Heart right ventricle (tissue), 16 donors: ENCODE measurements at regions of chr12 and their contacts with region 1.

Region 1: GRCh38 chr12:111024205-111024801 is 103.9 kb upstream of the MYL2 start:
- DNase-seq: peak; percentile 42 to 49
- ATAC-seq: peak; percentile 72 to 90 (median 81)
- H3K4me3 ChIP-seq: no peak overlapping the region
- H3K27ac ChIP-seq: no peak overlapping the region
- H3K4me1 ChIP-seq: no peaks in the 10 kb centered on the region
- H3K27me3 ChIP-seq: peaks cover 0 to 62% (median 45%) of the 10 kb centered on the region in 7 donors
- CTCF ChIP-seq: peak; percentile 45 to 86 (median 65)

Region 2: GRCh38 chr12:111166779-111167540 is 142.7 kb after region 1 on chr12:
- intact Hi-C with region 1: loop called in 2 of 10 experiments (anchors 10 kb)
- DNase-seq: peak; percentile 68 to 73
- ATAC-seq: peak; percentile 64 to 93 (median 82)
- H3K4me3 ChIP-seq: no peak overlapping the region
- H3K27ac ChIP-seq: no peak overlapping the region
- H3K4me1 ChIP-seq: peaks cover 0 to 12% (median 0%) of the 10 kb centered on the region in 9 donors
- H3K27me3 ChIP-seq: peaks cover 0 to 14% (median 0%) of the 10 kb centered on the region in 7 donors
- CTCF ChIP-seq: no peak

Region 3: GRCh38 chr12:111174251-111174960 is 150.1 kb after region 1 on chr12:
- intact Hi-C with region 1: loop called in 2 of 10 experiments (anchors 10 kb)
- DNase-seq: no peak
- ATAC-seq: peak in 2 of 8 donors; percentile 43
- H3K4me3 ChIP-seq: no peak overlapping the region
- H3K27ac ChIP-seq: no peak overlapping the region
- H3K4me1 ChIP-seq: peaks cover 0 to 33% (median 0%) of the 10 kb centered on the region in 9 donors
- H3K27me3 ChIP-seq: peaks cover 0 to 32% (median 6%) of the 10 kb centered on the region in 7 donors
- CTCF ChIP-seq: peak in 7 of 9 donors; percentile 14 to 43 (median 36)

Region 4: GRCh38 chr12:111298582-111299436 is 274.5 kb after region 1 on chr12:
- intact Hi-C with region 1: loop called in 9 of 10 experiments (anchors 2 to 10 kb)
- DNase-seq: peak; percentile 23 to 35
- ATAC-seq: peak; percentile 45 to 84 (median 68)
- H3K4me3 ChIP-seq: no peak overlapping the region
- H3K27ac ChIP-seq: no peak overlapping the region
- H3K4me1 ChIP-seq: no peaks in the 10 kb centered on the region
- H3K27me3 ChIP-seq: peaks cover 0 to 5% (median 0%) of the 10 kb centered on the region in 7 donors
- CTCF ChIP-seq: peak; percentile 62 to 91 (median 80)

Region 5: DNA sequence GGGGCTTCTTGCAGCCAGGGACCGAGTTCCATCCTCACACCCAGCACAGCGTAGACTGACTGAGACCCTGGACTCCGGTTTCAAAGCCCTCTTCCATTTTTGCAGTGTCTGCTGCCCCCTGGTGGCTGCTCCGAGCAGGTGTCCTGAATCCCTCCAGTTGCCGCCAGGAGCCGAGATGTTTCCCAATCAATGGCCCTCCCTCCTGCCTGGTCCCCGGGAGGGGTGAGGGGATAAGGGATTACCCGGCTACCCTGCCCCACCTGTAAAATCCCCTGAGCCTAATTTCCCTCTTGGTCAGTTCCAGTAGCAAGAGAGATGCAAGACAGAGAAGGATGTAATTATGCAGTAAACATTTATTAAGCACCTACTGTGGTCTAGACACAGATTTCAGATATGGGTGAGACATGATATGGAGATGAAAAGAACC is 289.5 kb after region 1 on chr12:
- intact Hi-C with region 1: loop called in 4 of 10 experiments (anchors 2 to 5 kb)
- DNase-seq: peak; percentile 65 to 73
- ATAC-seq: peak; percentile 61 to 79 (median 77)
- H3K4me3 ChIP-seq: peak overlapping the region in 1 of 10 donors; percentile 40
- H3K27ac ChIP-seq: peak overlapping the region in 1 of 10 donors; percentile 52
- H3K4me1 ChIP-seq: peaks cover 0 to 9% (median 0%) of the 10 kb centered on the region in 9 donors
- H3K27me3 ChIP-seq: peaks cover 0 to 14% (median 3%) of the 10 kb centered on the region in 7 donors
- CTCF ChIP-seq: peak; percentile 82 to 97 (median 92)